Naive thymus-derived CD4-positive, alpha-beta T cell (primary cell): ENCODE measurements at regions of chr3 and their contacts with region 1.

Region 1: DNA sequence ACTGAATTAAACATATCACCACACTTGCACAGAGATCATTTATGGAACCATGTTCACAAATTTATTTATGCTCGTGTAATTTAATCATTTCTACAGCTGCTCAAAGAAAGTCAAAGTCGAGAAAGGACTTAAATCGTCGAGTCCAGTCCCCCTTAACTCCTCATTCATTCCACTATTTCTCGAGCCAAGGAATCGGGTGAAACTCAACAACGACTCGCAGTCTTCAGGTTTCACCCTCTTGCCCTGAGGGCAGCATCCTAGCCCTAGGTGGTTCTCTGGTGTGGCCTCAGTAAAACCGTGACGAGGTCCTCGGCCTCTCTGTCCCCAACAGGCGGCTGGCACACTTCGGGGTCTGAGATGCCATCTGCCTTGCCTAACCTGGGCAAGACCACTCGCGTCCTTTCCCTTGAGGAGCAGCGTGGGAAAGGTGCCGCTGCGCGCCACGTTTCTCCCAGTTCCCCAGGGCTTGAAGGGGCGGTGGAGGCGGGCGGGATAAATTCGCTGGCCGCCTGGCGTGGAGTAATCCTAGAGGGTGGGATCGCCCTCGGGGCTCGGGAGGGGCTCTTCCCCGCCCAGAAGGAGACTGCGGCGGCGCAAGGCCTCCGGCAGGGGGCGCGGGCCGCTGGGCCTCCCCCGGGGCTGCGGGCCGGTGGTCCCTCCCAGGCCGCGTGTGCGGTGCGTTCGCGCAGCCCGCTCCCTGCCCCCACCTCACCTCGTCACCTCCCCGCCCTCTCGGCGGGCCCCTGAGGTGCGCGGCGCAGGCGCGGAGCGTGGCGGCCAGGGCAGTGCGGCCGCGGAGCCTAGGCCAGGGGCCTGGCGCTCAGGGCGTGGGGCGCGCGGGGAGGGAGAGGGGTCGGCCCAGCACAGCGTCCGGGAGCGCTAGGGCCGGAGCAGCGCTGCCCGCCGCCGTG is at the start of gene ZNF639:
- DNase-seq: peak; percentile 80 to 89 (median 85)
- ATAC-seq: peak; percentile 94
- H3K4me3 ChIP-seq: peak within 1 kb of the TSS; percentile 93
- H3K4me3 Mint-ChIP-seq: peak within 1 kb of the TSS; percentile 88 to 96 (median 94)
- H3K27ac ChIP-seq: peak within 1 kb of the TSS; percentile 98
- H3K27ac Mint-ChIP-seq: peak within 1 kb of the TSS; percentile 81 to 98 (median 93)
- H3K4me1 ChIP-seq: peaks cover 9 to 22% of the 10 kb centered on the region in 2 donors
- H3K4me1 Mint-ChIP-seq: peaks cover 22 to 48% (median 37%) of the 10 kb centered on the region in 7 donors
- H3K27me3 ChIP-seq: no peaks in the 10 kb centered on the region
- H3K27me3 Mint-ChIP-seq: peaks cover 0 to 16% (median 0%) of the 10 kb centered on the region in 5 donors
- total RNA-seq, gene ZNF639: 33.1 to 74.9 (median 46.0) TPM

Region 2: GRCh38 chr3:178436773-178437172 is 885.8 kb before region 1 on chr3:
- CTCF ChIA-PET with region 1: interaction called, 8 read pairs
- POLR2A ChIA-PET with region 1: no interaction called
- intact Hi-C with region 1: loop called in 1 of 2 experiments (anchors 5 kb)
- DNase-seq: peak in 5 of 9 donors; percentile 1 to 26 (median 13)
- ATAC-seq: peak; percentile 59
- H3K4me3 ChIP-seq: no peak overlapping the region
- H3K4me3 Mint-ChIP-seq: no peak overlapping the region
- H3K27ac ChIP-seq: no peak overlapping the region
- H3K27ac Mint-ChIP-seq: no peak overlapping the region
- H3K4me1 ChIP-seq: no peaks in the 10 kb centered on the region
- H3K4me1 Mint-ChIP-seq: no peaks in the 10 kb centered on the region
- H3K27me3 ChIP-seq: no peaks in the 10 kb centered on the region
- H3K27me3 Mint-ChIP-seq: peaks cover 0 to 8% (median 0%) of the 10 kb centered on the region in 5 donors

Region 3: GRCh38 chr3:179105881-179106280 is 216.7 kb before region 1 on chr3:
- CTCF ChIA-PET with region 1: interaction called, 32 read pairs
- POLR2A ChIA-PET with region 1: no interaction called
- intact Hi-C with region 1: no loop called
- DNase-seq: no peak
- ATAC-seq: no peak
- H3K4me3 ChIP-seq: no peak overlapping the region
- H3K4me3 Mint-ChIP-seq: no peak overlapping the region
- H3K27ac ChIP-seq: no peak overlapping the region
- H3K27ac Mint-ChIP-seq: peak overlapping the region in 1 of 9 donors; percentile 84
- H3K4me1 ChIP-seq: no peaks in the 10 kb centered on the region
- H3K4me1 Mint-ChIP-seq: peaks cover 0 to 5% (median 3%) of the 10 kb centered on the region in 7 donors
- H3K27me3 ChIP-seq: no peaks in the 10 kb centered on the region
- H3K27me3 Mint-ChIP-seq: peaks cover 0 to 12% (median 5%) of the 10 kb centered on the region in 5 donors

Region 4: GRCh38 chr3:179272385-179272784 is 50.2 kb before region 1 on chr3:
- CTCF ChIA-PET with region 1: no interaction called
- POLR2A ChIA-PET with region 1: no interaction called
- intact Hi-C with region 1: no loop called
- DNase-seq: no peak
- ATAC-seq: no peak
- H3K4me3 ChIP-seq: no peak overlapping the region
- H3K4me3 Mint-ChIP-seq: no peak overlapping the region
- H3K27ac ChIP-seq: no peak overlapping the region
- H3K27ac Mint-ChIP-seq: no peak overlapping the region
- H3K4me1 ChIP-seq: no peaks in the 10 kb centered on the region
- H3K4me1 Mint-ChIP-seq: peaks cover 0 to 2% (median 0%) of the 10 kb centered on the region in 7 donors
- H3K27me3 ChIP-seq: no peaks in the 10 kb centered on the region
- H3K27me3 Mint-ChIP-seq: peaks cover 6 to 15% (median 8%) of the 10 kb centered on the region in 5 donors

Region 5: GRCh38 chr3:179347345-179348194 is 25.0 kb after region 1 on chr3 and contains the start of gene MFN1:
- CTCF ChIA-PET with region 1: interaction called, 5 read pairs
- POLR2A ChIA-PET with region 1: interaction called, 24 read pairs
- intact Hi-C with region 1: loop called (anchors 1 kb)
- DNase-seq: peak; percentile 69 to 91 (median 88)
- ATAC-seq: peak; percentile 99
- H3K4me3 ChIP-seq: peak within 1 kb of the TSS; percentile 99
- H3K4me3 Mint-ChIP-seq: peak within 1 kb of the TSS; percentile 97 to 100 (median 98)
- H3K27ac ChIP-seq: peak within 1 kb of the TSS; percentile 81
- H3K27ac Mint-ChIP-seq: peak within 1 kb of the TSS; percentile 84 to 98 (median 94)
- H3K4me1 ChIP-seq: peaks cover 8 to 13% of the 10 kb centered on the region in 2 donors
- H3K4me1 Mint-ChIP-seq: peaks cover 7 to 39% (median 28%) of the 10 kb centered on the region in 7 donors
- H3K27me3 ChIP-seq: no peaks in the 10 kb centered on the region
- H3K27me3 Mint-ChIP-seq: no peaks in the 10 kb centered on the region
- total RNA-seq, gene MFN1: 32.2 to 58.1 (median 40.3) TPM

Region 6: DNA sequence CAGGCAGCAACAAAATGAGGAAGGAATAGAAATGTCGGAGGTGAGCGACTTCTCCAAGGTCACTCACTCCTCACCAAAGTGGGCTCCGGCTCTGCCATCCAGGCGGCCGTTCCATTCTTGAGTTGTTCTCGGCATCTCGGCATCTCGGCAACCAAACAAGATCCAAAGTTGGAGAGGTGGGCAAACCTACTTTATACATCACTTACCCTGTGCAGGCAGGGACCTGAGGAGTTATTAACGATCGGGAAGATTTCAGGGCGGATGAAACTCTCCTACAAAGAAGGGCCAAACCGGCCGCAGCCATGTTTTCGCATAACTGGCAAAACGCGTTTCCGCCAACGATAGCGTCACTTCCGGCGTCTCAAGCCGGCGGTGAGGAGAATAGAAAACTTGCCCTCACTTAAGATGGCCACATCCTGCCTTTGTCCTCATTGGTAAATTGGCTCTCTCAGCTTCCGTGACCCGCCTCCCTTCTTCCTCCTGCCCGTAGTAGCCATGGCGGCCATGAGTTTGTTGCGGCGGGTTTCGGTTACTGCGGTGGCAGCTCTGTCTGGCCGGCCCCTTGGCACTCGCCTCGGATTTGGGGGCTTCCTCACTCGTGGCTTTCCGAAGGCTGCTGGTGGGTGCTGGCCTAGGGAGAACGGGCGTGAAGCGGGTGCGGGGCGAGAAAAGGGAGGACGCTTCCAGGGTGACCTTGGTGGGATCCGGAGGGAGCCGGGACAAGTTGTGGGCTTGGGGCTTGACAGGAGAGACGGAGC is 282.0 kb after region 1 on chr3 and contains the starts of genes MRPL47 and NDUFB5:
- CTCF ChIA-PET with region 1: no interaction called
- POLR2A ChIA-PET with region 1: no interaction called
- intact Hi-C with region 1: loop called (anchors 1 kb)
- DNase-seq: peak; percentile 76 to 95 (median 92)
- ATAC-seq: peak; percentile 100
- H3K4me3 ChIP-seq: peak within 1 kb of the TSS; percentile 95
- H3K4me3 Mint-ChIP-seq: peak within 1 kb of the TSS; percentile 95 to 99 (median 99)
- H3K27ac ChIP-seq: peak within 1 kb of the TSS; percentile 90
- H3K27ac Mint-ChIP-seq: peak within 1 kb of the TSS; percentile 98 to 100 (median 99)
- H3K4me1 ChIP-seq: peaks cover 15 to 25% of the 10 kb centered on the region in 2 donors
- H3K4me1 Mint-ChIP-seq: peaks cover 23 to 65% (median 46%) of the 10 kb centered on the region in 7 donors
- H3K27me3 ChIP-seq: no peaks in the 10 kb centered on the region
- H3K27me3 Mint-ChIP-seq: no peaks in the 10 kb centered on the region
- total RNA-seq, gene MRPL47: 14.4 to 41.4 (median 18.5) TPM
- total RNA-seq, gene NDUFB5: 33.4 to 80.2 (median 62.8) TPM

Region 7: DNA sequence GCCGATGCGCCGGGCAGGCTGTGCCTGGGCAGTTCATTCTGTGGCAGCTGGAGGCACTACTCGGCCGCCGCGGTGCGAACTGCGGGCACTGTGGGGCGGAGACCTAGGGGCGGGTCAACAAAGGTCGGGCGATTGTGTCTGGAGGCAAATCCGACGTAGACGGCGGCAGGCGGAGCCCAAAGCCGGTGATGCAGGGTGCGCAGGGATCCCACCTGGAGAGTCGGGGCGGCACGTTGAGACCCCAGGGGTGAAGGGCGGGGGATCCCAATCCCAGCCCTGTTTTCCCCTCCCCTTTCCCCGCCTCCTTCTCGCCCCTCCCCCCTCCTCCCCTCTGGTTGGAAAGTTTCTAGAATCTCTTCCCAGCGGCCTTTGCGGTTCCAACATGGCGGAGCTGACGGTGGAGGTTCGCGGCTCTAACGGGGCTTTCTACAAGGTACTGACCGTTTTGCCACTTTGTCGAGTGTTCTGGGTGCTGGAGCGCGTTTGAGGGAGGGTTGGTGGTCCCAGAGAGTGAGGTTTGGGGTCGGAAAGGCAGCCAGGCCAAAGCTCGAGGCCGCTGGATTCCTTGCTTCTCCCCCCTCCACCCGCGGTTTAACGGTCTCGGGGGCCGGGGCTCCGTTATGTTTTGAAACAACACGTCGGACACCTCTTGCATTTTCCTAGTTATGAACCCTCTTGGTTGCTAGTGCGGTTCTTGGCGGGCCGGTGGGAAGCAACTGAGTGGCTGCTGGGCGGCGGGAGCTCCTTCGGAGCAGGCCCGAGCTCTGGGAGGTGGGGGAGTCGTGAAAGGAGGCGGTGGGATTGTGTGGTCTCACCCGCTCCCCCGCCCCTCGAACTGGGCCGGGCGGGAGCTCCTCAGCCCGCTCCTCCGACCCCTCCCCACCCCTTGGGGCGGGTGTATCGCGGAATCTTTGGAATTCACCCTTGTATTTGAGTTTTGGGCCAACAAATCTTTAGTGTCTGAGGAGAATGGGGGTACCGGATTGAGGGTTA is 1590.1 kb after region 1 on chr3 and contains the start of gene FXR1:
- CTCF ChIA-PET with region 1: no interaction called
- POLR2A ChIA-PET with region 1: no interaction called
- intact Hi-C with region 1: loop called in 1 of 2 experiments (anchors 5 kb)
- DNase-seq: peak; percentile 80 to 91 (median 89)
- ATAC-seq: peak; percentile 95
- H3K4me3 ChIP-seq: peak within 1 kb of the TSS; percentile 80
- H3K4me3 Mint-ChIP-seq: peak within 1 kb of the TSS; percentile 91 to 98 (median 96)
- H3K27ac ChIP-seq: peak within 1 kb of the TSS; percentile 97
- H3K27ac Mint-ChIP-seq: peak within 1 kb of the TSS; percentile 94 to 100 (median 97)
- H3K4me1 ChIP-seq: peaks cover 17 to 25% of the 10 kb centered on the region in 2 donors
- H3K4me1 Mint-ChIP-seq: peaks cover 35 to 76% (median 67%) of the 10 kb centered on the region in 7 donors
- H3K27me3 ChIP-seq: no peaks in the 10 kb centered on the region
- H3K27me3 Mint-ChIP-seq: no peaks in the 10 kb centered on the region
- total RNA-seq, gene FXR1: 108 to 151 (median 129) TPM